Ascending aorta (tissue), 2 donors: ENCODE measurements at regions of chr11 and their contacts with region 1.

Region 1: GRCh38 chr11:110296226-110297075 is at the start of gene RDX:
- DNase-seq: peak in 1 of 2 donors; percentile 82
- H3K4me3 ChIP-seq: peak within 1 kb of the TSS; percentile 83 to 95
- H3K27ac ChIP-seq: peak within 1 kb of the TSS; percentile 87 to 95
- H3K4me1 ChIP-seq: peaks cover 5 to 18% of the 10 kb centered on the region in 2 donors
- H3K27me3 ChIP-seq: no peaks in the 10 kb centered on the region
- CTCF ChIP-seq: peak in 1 of 3 experiments; percentile 17
- total RNA-seq, gene RDX: 105 TPM

Region 2: DNA sequence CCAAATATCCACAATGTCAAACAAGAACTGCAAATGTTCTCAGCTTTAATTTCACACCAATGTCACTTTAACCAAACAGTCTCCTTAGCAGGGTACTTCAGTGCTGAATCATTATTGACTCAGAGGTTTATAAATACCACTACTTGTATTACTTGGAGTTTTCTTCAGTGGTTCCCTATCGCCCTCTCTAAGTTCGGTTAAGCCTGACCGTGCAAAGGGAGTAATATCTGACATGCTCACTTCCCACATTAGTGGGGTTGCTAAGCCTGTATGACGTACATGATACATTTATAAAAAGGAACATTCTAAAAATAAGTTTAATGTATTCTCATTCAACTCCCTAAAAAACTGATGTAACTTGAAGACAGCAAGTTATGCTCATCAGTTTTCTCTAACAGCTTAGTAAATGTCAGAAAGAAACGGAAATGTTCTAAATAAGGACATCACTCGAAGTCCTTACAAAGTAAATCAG is 296.4 kb before region 1 on chr11:
- intact Hi-C with region 1: loop called (anchors 10 kb)
- DNase-seq: peak in 1 of 2 donors; percentile 66
- H3K4me3 ChIP-seq: no peak overlapping the region
- H3K27ac ChIP-seq: peak overlapping the region; percentile 10 to 45
- H3K4me1 ChIP-seq: peaks cover 0 to 6% of the 10 kb centered on the region in 2 donors
- H3K27me3 ChIP-seq: no peaks in the 10 kb centered on the region
- CTCF ChIP-seq: no peak

Region 3: GRCh38 chr11:110032259-110032658 is 264.2 kb before region 1 on chr11:
- intact Hi-C with region 1: no loop called
- DNase-seq: no peak
- H3K4me3 ChIP-seq: no peak overlapping the region
- H3K27ac ChIP-seq: no peak overlapping the region
- H3K4me1 ChIP-seq: no peaks in the 10 kb centered on the region
- H3K27me3 ChIP-seq: no peaks in the 10 kb centered on the region
- CTCF ChIP-seq: no peak

Region 4: DNA sequence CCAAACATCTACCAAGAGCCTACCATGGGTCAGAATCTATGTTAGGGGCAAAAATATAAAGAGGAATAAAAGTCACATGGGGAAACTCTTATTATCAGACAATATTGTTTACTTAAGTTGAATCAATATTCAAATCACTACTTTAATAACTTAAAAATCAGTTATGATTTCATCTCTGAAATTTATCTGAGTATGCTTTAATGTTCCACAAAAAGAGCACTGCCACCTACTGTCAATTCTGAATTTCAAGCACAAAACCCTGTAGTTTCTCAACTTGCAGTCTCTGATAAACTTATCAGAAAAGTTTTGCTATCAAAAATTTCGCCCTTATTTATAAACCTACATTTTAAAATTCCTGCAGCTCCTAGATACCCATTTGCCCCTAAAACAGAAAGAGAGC is 47.4 kb before region 1 on chr11:
- intact Hi-C with region 1: no loop called
- DNase-seq: no peak
- H3K4me3 ChIP-seq: no peak overlapping the region
- H3K27ac ChIP-seq: no peak overlapping the region
- H3K4me1 ChIP-seq: no peaks in the 10 kb centered on the region
- H3K27me3 ChIP-seq: no peaks in the 10 kb centered on the region
- CTCF ChIP-seq: peak in 1 of 3 experiments; percentile 21

Region 5: DNA sequence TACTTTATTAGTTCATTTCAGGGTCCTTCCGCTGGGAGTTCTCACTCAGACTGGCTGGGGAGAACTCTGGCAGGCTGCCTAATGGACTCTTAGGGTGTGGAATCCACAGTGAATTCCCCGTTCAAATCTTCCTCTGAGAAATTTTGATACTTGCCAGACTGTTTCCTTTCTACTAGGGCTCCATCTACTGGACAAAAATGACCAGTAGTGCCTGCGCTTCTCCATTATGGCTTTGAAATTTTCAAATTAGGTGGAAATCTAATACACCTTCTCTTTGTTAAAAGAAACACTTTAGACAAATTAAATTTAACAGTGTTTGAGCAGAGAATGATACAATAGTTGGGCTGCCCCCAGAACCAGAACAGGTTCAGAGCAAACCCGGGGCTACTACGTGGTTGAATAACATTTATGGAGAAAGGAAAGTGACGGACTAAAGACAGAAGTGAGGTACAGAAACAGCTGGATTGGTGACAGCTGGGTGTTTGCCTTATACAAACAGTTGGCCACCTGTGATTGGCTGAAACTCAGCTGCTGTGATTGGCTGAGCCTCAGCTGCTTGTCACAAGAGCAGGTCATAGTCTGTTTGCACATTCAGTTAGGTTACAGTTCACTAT is 80.4 kb after region 1 on chr11:
- intact Hi-C with region 1: loop called (anchors 5 kb)
- DNase-seq: peak; percentile 39 to 79
- H3K4me3 ChIP-seq: peak overlapping the region in 1 of 2 donors; percentile 24
- H3K27ac ChIP-seq: peak overlapping the region in 1 of 2 donors; percentile 29
- H3K4me1 ChIP-seq: peaks cover 0 to 6% of the 10 kb centered on the region in 2 donors
- H3K27me3 ChIP-seq: no peaks in the 10 kb centered on the region
- CTCF ChIP-seq: peak; percentile 41 to 81 (median 71)